Caco-2 (cell line): ENCODE measurements at regions of chr19 and their contacts with region 1.

Region 1: DNA sequence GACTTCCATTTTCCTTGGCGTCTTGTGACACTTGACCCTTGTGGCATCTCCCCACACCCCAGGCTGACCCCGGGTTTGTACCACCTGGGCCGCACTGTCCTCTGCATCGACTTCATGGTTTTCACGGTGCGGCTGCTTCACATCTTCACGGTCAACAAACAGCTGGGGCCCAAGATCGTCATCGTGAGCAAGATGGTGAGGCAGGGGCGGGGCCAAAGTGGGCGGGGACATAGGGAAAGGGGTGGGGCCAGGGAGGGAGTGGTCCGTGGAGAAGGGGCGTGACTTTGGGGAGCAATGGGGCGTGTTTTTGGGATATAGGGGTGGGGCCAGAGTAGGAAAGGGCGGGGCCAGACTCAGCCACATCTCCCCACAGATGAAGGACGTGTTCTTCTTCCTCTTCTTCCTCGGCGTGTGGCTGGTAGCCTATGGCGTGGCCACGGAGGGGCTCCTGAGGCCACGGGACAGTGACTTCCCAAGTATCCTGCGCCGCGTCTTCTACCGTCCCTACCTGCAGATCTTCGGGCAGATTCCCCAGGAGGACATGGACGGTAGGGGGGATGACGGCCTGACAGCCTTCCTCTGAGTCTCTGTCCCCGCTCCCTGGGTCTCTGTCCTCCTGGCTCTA is 42.8 kb downstream of the TRPM4 start:
- DNase-seq: peak; percentile 31 to 55
- H3K4me3 ChIP-seq: no peak overlapping the region
- H3K4me3 Mint-ChIP-seq: no peak overlapping the region
- H3K27ac Mint-ChIP-seq: peak overlapping the region; percentile 20
- H3K4me1 ChIP-seq: no peaks in the 10 kb centered on the region
- H3K4me1 Mint-ChIP-seq: no peaks in the 10 kb centered on the region
- H3K27me3 ChIP-seq: no peaks in the 10 kb centered on the region
- H3K27me3 Mint-ChIP-seq: no peaks in the 10 kb centered on the region
- CTCF ChIP-seq: no peak

Region 2: GRCh38 chr19:49127674-49128544 is 72.4 kb before region 1 on chr19:
- CTCF ChIA-PET with region 1: interaction called, 34 read pairs
- POLR2A ChIA-PET with region 1: no interaction called
- intact Hi-C with region 1: no loop called
- DNase-seq: peak; percentile 98
- H3K4me3 ChIP-seq: peak overlapping the region; percentile 46
- H3K4me3 Mint-ChIP-seq: peak overlapping the region; percentile 85
- H3K27ac Mint-ChIP-seq: peak overlapping the region; percentile 80
- H3K4me1 ChIP-seq: peaks cover 17% of the 10 kb centered on the region; the same call in 1 of the 2 replicates
- H3K4me1 Mint-ChIP-seq: peaks cover 26% of the 10 kb centered on the region
- H3K27me3 ChIP-seq: no peaks in the 10 kb centered on the region
- H3K27me3 Mint-ChIP-seq: no peaks in the 10 kb centered on the region
- CTCF ChIP-seq: peak in 1 of 2 experiments; percentile 16